GM13976 (cell line): ENCODE measurements at regions of chr2 and their contacts with region 1.

Region 1: DNA sequence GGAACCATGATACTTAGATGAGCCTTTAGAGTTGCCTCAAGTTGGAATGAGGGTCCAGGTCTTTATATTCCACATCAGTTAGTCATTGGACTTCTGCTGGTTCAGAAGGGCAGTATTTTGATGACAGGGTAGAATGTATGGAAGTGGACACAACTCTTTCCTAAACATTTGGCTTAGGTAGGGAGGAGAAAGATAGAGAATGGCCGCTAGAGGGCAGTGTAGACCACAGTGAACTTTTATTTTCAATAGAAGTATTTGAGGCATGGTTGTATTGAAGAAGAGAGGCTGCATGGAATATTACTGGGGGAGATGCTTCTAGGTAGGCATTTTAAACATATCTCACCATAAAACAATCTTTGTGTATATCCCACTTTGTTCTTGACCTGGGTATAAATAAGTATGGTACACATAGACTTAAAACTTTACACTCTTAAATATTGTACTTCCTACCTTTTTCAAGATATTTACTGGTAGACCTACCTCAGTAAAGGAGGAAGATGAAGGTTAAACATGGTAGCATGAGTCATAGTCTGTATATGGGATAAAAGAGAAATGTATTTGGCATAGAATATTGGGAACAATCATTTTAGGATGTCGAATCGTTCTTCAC is 497.6 kb upstream of the FAM98A start:
- DNase-seq: peak; percentile 15
- CTCF ChIP-seq: peak; percentile 63

Region 2: DNA sequence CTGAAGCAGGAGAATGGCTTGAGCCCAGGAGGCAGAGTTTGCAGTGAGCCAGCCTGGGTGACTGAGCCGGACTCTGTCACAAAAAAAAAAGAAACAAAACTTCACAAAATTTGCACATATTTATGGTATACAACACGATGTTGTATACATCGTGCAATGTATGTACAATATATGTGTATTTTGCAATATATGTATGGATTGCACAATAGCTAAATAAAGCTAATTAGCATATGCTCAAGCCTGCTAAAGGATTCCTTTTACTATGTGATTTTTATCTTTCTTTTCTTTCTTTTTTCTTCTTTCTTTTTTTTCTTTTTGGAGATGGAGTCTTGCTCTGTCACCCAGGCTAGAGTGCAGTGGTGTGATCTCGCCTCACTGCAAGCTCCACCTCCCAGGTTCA is 129.6 kb before region 1 on chr2:
- in situ Hi-C with region 1: no loop called
- DNase-seq: no peak
- CTCF ChIP-seq: no peak

Region 3: GRCh38 chr2:34031097-34031496 is 65.6 kb before region 1 on chr2:
- in situ Hi-C with region 1: no loop called
- DNase-seq: no peak
- CTCF ChIP-seq: no peak

Region 4: DNA sequence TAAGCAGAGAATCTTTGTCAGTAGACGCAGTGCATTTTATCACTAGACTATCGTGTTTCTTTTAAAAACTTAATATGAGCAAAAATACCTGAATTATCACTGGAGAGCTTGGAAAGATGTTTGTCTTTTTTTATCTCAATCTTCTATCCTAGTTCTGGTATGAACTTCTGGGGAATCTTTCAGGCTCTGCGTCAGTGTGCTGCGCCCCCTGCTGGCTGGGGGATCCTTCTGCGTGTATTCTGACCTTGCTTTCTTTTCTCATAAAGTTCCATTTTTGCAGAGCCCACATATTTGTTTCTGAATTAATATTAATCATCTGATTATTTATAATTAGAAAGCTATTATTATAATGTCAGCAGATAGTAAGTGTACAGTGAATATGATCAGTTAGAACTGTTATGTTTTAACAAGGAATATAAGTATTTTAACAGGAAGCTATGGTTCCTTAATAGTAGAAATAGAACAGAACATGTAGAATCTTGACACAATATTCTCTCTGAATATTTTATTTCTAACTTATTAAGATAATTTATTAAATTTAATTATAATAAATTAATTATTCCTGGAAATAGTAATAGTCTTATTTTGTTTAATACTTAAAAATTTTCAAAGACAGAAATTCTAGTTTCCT is 1313.9 kb after region 1 on chr2:
- in situ Hi-C with region 1: loop called (anchors 25 kb)
- DNase-seq: peak; percentile 29
- CTCF ChIP-seq: peak; percentile 74